Psoas muscle (tissue), 8 donors: ENCODE measurements at regions of chr19 and their contacts with region 1.

Region 1: DNA sequence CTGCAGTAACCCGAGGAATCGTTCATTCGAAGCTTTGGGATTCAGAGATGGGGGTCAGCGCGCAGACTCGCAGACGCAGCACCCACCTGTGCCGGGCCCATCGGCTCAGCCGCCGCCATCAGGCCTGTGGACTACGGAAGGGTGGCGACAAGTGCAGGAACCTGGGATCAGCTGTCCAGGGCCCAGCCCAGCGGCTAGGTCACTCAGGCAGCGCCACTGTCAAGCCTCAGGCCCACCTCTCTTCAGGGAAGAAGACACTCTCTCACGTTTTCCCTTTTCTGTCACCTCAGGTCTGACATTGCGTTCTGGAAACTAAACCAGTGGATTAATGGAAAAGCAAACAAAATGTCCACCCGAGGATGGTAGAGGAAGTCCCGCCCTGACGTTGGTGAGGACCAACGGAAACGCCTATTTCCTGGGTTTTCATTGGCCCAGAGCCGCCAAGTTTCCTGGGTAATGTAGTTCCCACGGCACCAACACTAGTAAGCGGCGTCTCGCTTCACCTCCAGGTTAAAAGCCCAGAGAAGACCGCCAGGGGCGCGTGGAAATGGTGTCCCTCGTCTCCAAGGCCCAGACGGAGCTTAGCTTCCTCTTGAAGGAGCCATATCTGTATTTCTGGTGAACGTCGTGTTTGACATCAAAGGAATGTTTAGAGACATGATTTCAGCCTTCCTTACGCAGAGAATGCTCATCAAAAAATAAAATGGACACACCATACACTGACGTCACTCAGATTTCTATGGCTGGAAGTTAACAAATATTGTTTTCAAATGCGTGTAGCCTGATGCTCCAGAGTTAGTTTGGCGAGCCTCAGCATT is at the start of gene ZNF772:
- DNase-seq: peak; percentile 89 to 93
- ATAC-seq: peak; percentile 100
- H3K4me3 ChIP-seq: peak within 1 kb of the TSS; percentile 91
- H3K27ac ChIP-seq: peak within 1 kb of the TSS; percentile 85
- H3K4me1 ChIP-seq: no peaks in the 10 kb centered on the region
- H3K27me3 ChIP-seq: no peaks in the 10 kb centered on the region
- CTCF ChIP-seq: peak; percentile 48
- total RNA-seq, gene ZNF772: 12.0 to 15.2 (median 14.1) TPM

Region 2: GRCh38 chr19:57435062-57435978 is 42.1 kb before region 1 on chr19 and contains the start of gene ZNF749:
- intact Hi-C with region 1: loop called in 1 of 2 experiments (anchors 10 kb)
- DNase-seq: peak; percentile 97 to 98
- ATAC-seq: peak; percentile 100
- H3K4me3 ChIP-seq: peak within 1 kb of the TSS; percentile 93
- H3K27ac ChIP-seq: peak within 1 kb of the TSS; percentile 38
- H3K4me1 ChIP-seq: peaks cover 7% of the 10 kb centered on the region
- H3K27me3 ChIP-seq: no peaks in the 10 kb centered on the region
- CTCF ChIP-seq: no peak
- total RNA-seq, gene ZNF749: 5.1 to 11.9 (median 8.0) TPM